ENCODE measurements at regions of chr1 and their contacts with region 1.

Region 1: DNA sequence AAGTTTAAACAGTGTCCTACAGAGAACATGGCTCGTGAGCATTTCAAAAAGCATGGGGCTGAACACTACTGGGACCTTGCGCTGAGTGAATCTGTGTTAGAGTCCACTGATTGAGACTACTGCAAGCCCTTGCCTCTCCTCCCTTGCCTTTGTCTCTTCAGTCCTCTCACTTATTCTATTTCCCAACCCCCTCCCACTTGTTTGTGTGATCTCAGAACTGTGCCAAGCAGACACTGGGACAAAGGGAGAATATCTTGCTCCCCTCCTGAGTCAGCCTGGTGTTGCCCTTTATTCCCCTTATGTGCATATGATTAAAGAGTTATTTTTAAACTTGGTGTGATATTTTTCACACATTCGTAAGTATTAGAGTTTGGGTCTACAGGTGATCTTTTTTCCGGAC is 11.1 kb upstream of the RPRD2 start:
- DNase-seq: no peak
- H3K4me3 ChIP-seq: no peak overlapping the region
- H3K4me3 Mint-ChIP-seq: no peak overlapping the region
- H3K27ac ChIP-seq: no peak overlapping the region
- H3K27ac Mint-ChIP-seq: peak overlapping the region in 1 of 7 donors; percentile 42
- H3K4me1 ChIP-seq: no peaks in the 10 kb centered on the region
- H3K4me1 Mint-ChIP-seq: no peaks in the 10 kb centered on the region
- H3K27me3 ChIP-seq: no peaks in the 10 kb centered on the region
- H3K27me3 Mint-ChIP-seq: no peaks in the 10 kb centered on the region
- CTCF ChIP-seq: no peak

Region 2: DNA sequence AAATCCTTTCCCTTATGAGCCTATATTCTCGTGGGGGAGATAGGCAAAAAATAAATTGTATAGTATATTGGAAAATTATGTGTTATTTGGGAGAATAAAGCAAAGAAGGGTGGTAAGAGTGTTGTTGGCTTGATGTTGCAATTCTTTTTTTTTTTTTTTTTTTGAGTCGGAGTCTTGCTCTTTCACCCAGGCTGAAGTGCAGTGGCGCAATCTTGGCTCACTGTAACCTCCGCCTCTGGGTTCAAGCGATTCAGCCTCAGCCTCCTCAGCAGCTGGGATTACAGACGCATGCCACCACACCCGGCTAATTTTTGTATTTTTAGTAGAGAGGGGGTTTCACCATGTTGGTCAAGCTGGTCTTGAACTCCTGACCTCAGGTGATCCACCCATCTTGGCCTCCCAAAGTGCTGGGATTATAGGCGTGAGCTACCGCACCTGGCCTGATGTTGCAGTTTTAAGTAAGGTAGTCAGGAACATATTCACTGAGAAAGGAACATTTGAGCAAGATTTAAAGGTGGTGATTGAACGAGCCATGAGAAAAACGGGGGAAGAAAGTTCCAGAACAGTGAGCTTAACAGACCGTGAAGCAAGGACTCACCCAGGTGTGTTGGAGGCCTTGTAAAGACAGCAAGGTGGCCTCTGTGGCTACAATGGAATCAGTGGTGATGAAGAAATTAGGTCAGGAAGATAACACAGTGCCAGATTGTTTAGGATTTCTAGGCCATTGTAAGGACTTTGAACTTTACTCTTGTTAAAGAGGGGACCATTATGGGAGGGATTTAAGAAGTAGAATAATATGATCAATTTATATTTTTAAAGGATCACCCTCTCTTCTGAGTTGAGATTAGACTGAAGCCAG is 56.9 kb after region 1 on chr1:
- intact Hi-C with region 1: loop called in 1 of 2 experiments (anchors 10 kb)
- DNase-seq: peak in 2 of 3 donors; percentile 4 to 22
- H3K4me3 ChIP-seq: peak overlapping the region in 1 of 3 experiments; percentile 18
- H3K4me3 Mint-ChIP-seq: no peak overlapping the region
- H3K27ac ChIP-seq: peak overlapping the region; percentile 8 to 54
- H3K27ac Mint-ChIP-seq: peak overlapping the region in 6 of 7 donors; percentile 48 to 79 (median 70)
- H3K4me1 ChIP-seq: peaks cover 15 to 27% of the 10 kb centered on the region in 2 donors
- H3K4me1 Mint-ChIP-seq: peaks cover 35% of the 10 kb centered on the region
- H3K27me3 ChIP-seq: no peaks in the 10 kb centered on the region
- H3K27me3 Mint-ChIP-seq: peaks cover 0 to 1% (median 0%) of the 10 kb centered on the region in 3 donors
- CTCF ChIP-seq: no peak

Measured in CD14-positive monocyte (primary cell).